ENCODE measurements at regions of chr11 and their contacts with region 1.

Region 1: DNA sequence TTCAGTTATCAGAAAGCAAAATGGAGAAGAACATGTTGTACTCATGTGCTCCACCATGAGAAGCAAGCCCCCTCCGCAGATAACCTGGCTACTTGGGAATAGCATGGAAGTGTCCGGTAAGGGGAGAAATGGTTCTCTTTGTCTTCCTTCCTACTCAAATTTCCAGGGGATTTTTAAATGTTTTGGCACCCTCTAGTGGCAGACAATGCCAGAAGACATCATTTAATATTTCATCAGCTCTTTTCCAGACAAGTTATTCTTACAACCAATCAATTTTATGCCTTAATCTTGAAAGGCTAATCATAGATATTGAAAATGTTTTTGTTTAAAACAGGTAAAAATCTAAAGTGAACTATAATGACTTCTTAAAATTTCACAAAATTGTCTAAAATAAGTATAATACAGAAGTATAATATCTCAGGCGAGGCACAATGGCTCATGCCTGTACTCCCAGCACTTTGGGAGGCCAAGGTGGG is 15.7 kb downstream of the CRTAM start:
- DNase-seq: peak; percentile 24 to 67 (median 30)
- H3K4me3 ChIP-seq: no peak overlapping the region
- H3K27ac ChIP-seq: no peak overlapping the region
- H3K4me1 ChIP-seq: no peaks in the 10 kb centered on the region
- H3K27me3 ChIP-seq: no peaks in the 10 kb centered on the region
- CTCF ChIP-seq: peak; percentile 28 to 75 (median 45)
- EP300 ChIP-seq: no peak
- POLR2A ChIP-seq: no peak

Region 2: GRCh38 chr11:122584670-122585069 is 269.3 kb before region 1 on chr11:
- intact Hi-C with region 1: loop called in 2 of 4 experiments (anchors 5 to 10 kb)
- DNase-seq: no peak
- H3K4me3 ChIP-seq: no peak overlapping the region
- H3K27ac ChIP-seq: no peak overlapping the region
- H3K4me1 ChIP-seq: no peaks in the 10 kb centered on the region
- H3K27me3 ChIP-seq: no peaks in the 10 kb centered on the region
- CTCF ChIP-seq: no peak
- EP300 ChIP-seq: no peak
- POLR2A ChIP-seq: no peak

Region 3: GRCh38 chr11:122628810-122629555 is 225.0 kb before region 1 on chr11:
- intact Hi-C with region 1: loop called in 3 of 4 experiments (anchors 5 to 10 kb)
- DNase-seq: peak; percentile 22 to 68 (median 49)
- H3K4me3 ChIP-seq: no peak overlapping the region
- H3K27ac ChIP-seq: no peak overlapping the region
- H3K4me1 ChIP-seq: no peaks in the 10 kb centered on the region
- H3K27me3 ChIP-seq: no peaks in the 10 kb centered on the region
- CTCF ChIP-seq: peak; percentile 18 to 58 (median 27)
- EP300 ChIP-seq: no peak
- POLR2A ChIP-seq: no peak

Region 4: GRCh38 chr11:123235117-123235655 is 381.2 kb after region 1 on chr11:
- intact Hi-C with region 1: no loop called
- DNase-seq: peak; percentile 64 to 83 (median 75)
- H3K4me3 ChIP-seq: no peak overlapping the region
- H3K27ac ChIP-seq: no peak overlapping the region
- H3K4me1 ChIP-seq: peaks cover 4% of the 10 kb centered on the region
- H3K27me3 ChIP-seq: no peaks in the 10 kb centered on the region
- CTCF ChIP-seq: peak; percentile 34 to 78 (median 45)
- EP300 ChIP-seq: no peak
- POLR2A ChIP-seq: no peak